Activated CD4-positive, alpha-beta memory T cell treated with anti-CD3 and anti-CD28 coated beads, Interleukin-2, amount 10 ng/mL, durations not matched to agents 7 days and 5 days (primary cell): ENCODE measurements at regions of chr1 and their contacts with region 1.

Region 1: DNA sequence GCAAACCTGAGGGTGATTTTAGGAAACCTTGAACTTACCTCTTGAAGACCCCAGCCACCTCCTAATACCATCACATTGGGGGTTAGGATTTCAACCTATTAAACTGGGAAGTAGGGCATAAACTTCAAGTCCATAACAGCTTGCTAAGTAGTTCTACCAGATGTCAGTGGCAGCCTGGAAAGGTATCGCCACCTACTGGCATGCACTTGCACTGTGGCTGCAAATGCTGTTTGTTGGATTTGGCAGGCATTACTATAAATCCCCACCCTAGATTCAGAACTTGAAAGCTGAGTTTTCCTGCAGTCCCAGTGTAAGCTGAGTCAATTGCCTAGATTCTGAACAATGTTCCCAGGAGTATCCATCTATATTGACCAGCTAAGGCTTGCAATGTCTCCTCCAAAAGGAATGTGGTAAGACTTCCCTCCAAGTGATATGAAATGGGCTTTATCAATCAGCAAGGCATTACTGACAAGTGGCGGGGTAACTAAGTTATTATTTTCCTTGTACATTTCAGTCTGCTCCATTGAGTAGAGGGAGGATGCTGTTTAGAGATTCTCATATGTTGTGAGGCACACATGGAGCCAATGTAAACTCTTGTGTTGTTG is 474.5 kb downstream of the PTPRC start:
- DNase-seq: peak; percentile 77
- H3K4me3 Mint-ChIP-seq: no peak overlapping the region
- H3K27ac Mint-ChIP-seq: no peak overlapping the region
- H3K4me1 Mint-ChIP-seq: peaks cover 10% of the 10 kb centered on the region
- H3K27me3 Mint-ChIP-seq: no peaks in the 10 kb centered on the region

Region 2: DNA sequence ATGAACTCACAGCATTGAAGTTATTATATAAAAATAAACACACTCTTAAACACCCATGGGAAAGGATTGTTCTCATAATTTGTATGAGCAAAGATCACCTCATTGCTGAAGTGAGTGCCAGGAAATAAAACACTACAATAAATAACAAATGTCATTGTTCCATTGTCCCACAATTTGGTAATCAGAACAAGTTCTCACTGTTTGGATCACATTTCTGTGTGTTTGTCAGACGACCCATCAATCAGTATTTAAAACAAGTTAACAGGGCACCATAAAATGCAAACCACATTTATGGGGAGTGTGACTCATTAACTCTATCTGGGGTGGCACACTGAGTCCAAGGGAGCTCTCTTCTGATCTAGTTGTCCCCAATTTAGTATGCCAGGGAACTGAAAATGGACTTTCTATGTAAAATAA is 350.1 kb before region 1 on chr1:
- CTCF ChIA-PET with region 1: interaction called, 11 read pairs
- POLR2A ChIA-PET with region 1: interaction called, 6 read pairs
- DNase-seq: no peak
- H3K4me3 Mint-ChIP-seq: no peak overlapping the region
- H3K27ac Mint-ChIP-seq: no peak overlapping the region
- H3K4me1 Mint-ChIP-seq: peaks cover 17% of the 10 kb centered on the region
- H3K27me3 Mint-ChIP-seq: no peaks in the 10 kb centered on the region

Region 3: GRCh38 chr1:198888394-198888943 is 224.9 kb before region 1 on chr1:
- CTCF ChIA-PET with region 1: interaction called, 11 read pairs
- POLR2A ChIA-PET with region 1: no interaction called
- DNase-seq: no peak
- H3K4me3 Mint-ChIP-seq: no peak overlapping the region
- H3K27ac Mint-ChIP-seq: no peak overlapping the region
- H3K4me1 Mint-ChIP-seq: no peaks in the 10 kb centered on the region
- H3K27me3 Mint-ChIP-seq: no peaks in the 10 kb centered on the region

Region 4: DNA sequence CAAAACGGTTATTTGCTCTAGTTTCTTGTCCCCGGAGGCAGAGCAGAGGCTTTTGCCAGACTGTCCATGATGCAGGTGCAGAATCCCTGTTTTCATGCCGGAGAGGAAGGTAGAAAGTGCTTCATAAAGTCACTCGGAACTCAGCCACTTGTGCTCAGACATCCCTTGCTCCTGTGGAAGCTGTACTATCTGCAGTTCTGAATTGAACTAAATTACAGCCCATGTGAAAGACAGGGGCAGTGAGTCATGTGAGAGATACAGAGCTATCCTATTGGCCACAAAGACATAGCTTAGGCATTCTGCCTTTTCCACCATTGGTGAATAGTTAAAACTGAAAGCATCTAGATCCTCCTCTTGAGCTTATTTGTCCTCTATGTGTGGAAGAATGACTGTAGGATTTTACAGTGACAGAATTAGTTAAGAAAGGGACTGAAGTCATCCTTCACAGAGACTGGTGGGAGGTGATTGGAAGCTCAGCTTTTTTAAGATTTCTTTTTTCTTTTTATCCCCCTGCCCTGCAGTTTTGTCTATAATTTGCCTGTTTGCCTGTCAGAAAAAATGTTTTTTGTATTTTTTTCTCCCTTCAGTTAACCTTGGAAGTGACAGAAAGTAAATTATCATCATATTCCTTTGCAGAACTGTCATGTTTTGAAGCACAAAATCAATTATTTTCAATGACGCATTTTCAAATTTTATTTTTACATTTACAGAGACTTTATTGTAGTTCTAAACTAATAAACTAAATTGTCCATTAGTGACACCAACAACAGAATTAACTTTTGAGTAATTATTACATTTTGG is 175.9 kb before region 1 on chr1:
- CTCF ChIA-PET with region 1: interaction called, 21 read pairs
- POLR2A ChIA-PET with region 1: interaction called, 18 read pairs
- DNase-seq: peak; percentile 64
- H3K4me3 Mint-ChIP-seq: no peak overlapping the region
- H3K27ac Mint-ChIP-seq: peak overlapping the region; percentile 85
- H3K4me1 Mint-ChIP-seq: peaks cover 20% of the 10 kb centered on the region
- H3K27me3 Mint-ChIP-seq: no peaks in the 10 kb centered on the region

Region 5: GRCh38 chr1:199041173-199041914 is 72.0 kb before region 1 on chr1:
- CTCF ChIA-PET with region 1: interaction called, 11 read pairs
- POLR2A ChIA-PET with region 1: interaction called, 4 read pairs
- DNase-seq: peak; percentile 54
- H3K4me3 Mint-ChIP-seq: peak overlapping the region; percentile 25
- H3K27ac Mint-ChIP-seq: peak overlapping the region; percentile 90
- H3K4me1 Mint-ChIP-seq: peaks cover 43% of the 10 kb centered on the region
- H3K27me3 Mint-ChIP-seq: no peaks in the 10 kb centered on the region

Region 6: GRCh38 chr1:199123615-199124014 is 10.2 kb after region 1 on chr1:
- CTCF ChIA-PET with region 1: interaction called, 22 read pairs
- POLR2A ChIA-PET with region 1: no interaction called
- DNase-seq: no peak
- H3K4me3 Mint-ChIP-seq: no peak overlapping the region
- H3K27ac Mint-ChIP-seq: no peak overlapping the region
- H3K4me1 Mint-ChIP-seq: no peaks in the 10 kb centered on the region
- H3K27me3 Mint-ChIP-seq: peaks cover 2% of the 10 kb centered on the region